PC-9 (cell line): ENCODE measurements at regions of chr16 and their contacts with region 1.

Region 1: DNA sequence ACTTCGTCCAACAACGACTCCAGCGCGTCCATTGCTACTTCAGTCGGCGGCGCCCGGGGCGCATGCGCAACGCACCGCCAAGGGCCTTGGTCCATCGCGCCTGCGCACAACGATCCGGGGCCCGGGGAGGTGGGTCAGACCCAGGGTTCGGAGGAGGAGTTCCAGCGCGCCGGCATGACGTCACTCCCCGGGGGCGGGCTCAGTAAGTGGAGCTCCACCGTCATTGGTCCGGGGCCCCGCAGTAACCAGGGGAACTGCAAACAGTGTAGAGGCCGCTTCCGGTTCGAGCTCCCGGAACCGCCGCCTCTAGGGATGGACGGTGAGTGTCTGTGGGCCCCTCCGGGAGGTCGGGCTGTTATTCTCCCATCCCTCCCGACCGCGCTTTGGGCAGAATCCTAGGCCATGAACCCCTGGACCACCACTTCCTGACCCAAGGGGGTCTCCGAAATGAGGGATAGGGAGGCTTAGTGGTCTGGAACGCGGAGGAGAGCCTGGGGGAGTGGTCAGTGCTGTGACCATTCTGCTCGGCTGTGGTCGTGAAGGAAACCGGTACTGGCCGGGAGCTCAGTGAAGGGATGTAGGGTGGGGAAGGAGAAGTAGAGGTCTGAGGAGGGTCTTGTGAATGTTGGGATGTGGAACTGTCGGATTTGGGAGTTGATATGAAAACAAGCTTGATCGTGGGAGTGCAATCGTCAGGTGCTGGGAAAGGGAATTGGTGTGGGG is at the starts of genes GTF3C1 and KATNIP:
- DNase-seq: peak; percentile 95 to 100
- H3K4me3 ChIP-seq: peak within 1 kb of the TSS; percentile 98
- H3K27ac ChIP-seq: 0 out of 2 replicates have a peak within 1 kb of the TSS, but pooled peaks have one; percentile 11
- H3K4me1 ChIP-seq: peaks cover 29% of the 10 kb centered on the region
- H3K27me3 ChIP-seq: no peaks in the 10 kb centered on the region
- CTCF ChIP-seq: no peak
- total RNA-seq, gene GTF3C1: 118 and 142 TPM in 2 replicates
- total RNA-seq, gene KATNIP: 60.9 and 64.8 TPM in 2 replicates

Region 2: GRCh38 chr16:27564224-27564623 is 14.2 kb after region 1 on chr16:
- CTCF ChIA-PET with region 1: interaction called, 3 read pairs
- POLR2A ChIA-PET with region 1: interaction called, 18 read pairs
- intact Hi-C with region 1: no loop called
- DNase-seq: no peak
- H3K4me3 ChIP-seq: no peak overlapping the region
- H3K27ac ChIP-seq: no peak overlapping the region
- H3K4me1 ChIP-seq: peaks cover 10% of the 10 kb centered on the region; the same call in 1 of the 2 replicates
- H3K27me3 ChIP-seq: no peaks in the 10 kb centered on the region
- CTCF ChIP-seq: no peak

Region 3: GRCh38 chr16:27579087-27579980 is 29.3 kb after region 1 on chr16:
- CTCF ChIA-PET with region 1: no interaction called
- POLR2A ChIA-PET with region 1: no interaction called
- intact Hi-C with region 1: loop called (anchors 2 kb)
- DNase-seq: peak in 1 of 2 experiments; percentile 14
- H3K4me3 ChIP-seq: no peak overlapping the region
- H3K27ac ChIP-seq: peak overlapping the region; percentile 55
- H3K4me1 ChIP-seq: peaks cover 24% of the 10 kb centered on the region
- H3K27me3 ChIP-seq: no peaks in the 10 kb centered on the region
- CTCF ChIP-seq: no peak